ENCODE measurements at regions of chr11 and their contacts with region 1.

Region 1: DNA sequence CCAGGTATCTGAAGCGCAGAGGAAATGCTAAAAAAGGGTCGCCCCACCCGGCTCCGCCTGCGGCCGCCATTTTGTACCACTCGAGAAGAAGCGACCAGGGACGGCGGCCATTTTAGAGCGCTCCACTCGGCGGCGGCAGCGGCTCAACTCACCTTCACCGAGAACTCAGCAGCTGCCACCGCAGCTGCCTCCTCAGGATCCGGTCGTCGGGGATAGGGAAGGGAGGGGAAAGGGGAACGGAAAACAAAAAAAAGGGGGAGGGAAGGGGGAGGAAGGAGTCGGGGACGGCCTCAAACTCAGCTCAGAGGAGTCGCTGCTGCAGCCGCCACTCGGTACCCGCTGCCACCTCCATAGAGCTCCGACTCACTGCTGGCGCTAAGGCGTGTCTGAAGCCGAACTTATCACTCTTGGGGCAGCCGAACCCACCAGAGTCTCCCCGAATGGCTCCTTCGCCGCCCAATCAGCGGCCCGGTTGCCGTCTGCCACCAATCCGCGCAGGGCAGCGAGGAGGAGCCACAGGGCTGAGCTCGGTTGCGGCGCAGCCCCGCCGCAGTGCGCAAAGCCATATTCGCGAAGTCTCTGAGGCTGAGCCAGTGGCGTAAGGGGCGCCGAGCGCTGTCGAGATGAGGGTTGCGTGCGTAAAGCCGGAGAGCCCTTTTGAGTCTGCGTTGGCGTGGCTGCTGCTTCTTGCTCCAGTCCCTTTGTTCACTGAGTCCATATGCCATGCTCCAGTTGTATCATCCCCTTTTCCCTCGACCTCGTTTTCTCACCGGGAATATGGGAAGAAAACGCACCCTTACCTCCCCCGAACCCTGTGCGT is at the start of gene EIF4G2:
- DNase-seq: peak; percentile 95 to 99 (median 98)
- ATAC-seq: peak; percentile 88 to 91
- H3K4me3 Mint-ChIP-seq: peak within 1 kb of the TSS; percentile 94 to 99 (median 97)
- H3K27ac Mint-ChIP-seq: peak within 1 kb of the TSS; percentile 96 to 100 (median 99)
- H3K4me1 Mint-ChIP-seq: peaks cover 22 to 52% (median 43%) of the 10 kb centered on the region in 4 donors
- H3K27me3 Mint-ChIP-seq: no peaks in the 10 kb centered on the region
- polyA plus RNA-seq, gene EIF4G2: 315 to 425 (median 340) TPM

Region 2: GRCh38 chr11:10725114-10725906 is 83.5 kb before region 1 on chr11:
- POLR2A ChIA-PET with region 1: no interaction called
- DNase-seq: peak in 2 of 10 donors; percentile 25 to 26
- ATAC-seq: peak; percentile 60 to 69
- H3K4me3 Mint-ChIP-seq: peak overlapping the region in 6 of 10 donors; percentile 19 to 45 (median 23)
- H3K27ac Mint-ChIP-seq: peak overlapping the region in 3 of 10 donors; percentile 34 to 53 (median 41)
- H3K4me1 Mint-ChIP-seq: peaks cover 16 to 20% (median 19%) of the 10 kb centered on the region in 4 donors
- H3K27me3 Mint-ChIP-seq: peaks cover 0 to 6% (median 3%) of the 10 kb centered on the region in 5 donors

Region 3: GRCh38 chr11:10750838-10751580 is 57.8 kb before region 1 on chr11 and contains the start of gene CTR9:
- POLR2A ChIA-PET with region 1: interaction called, 46 read pairs
- DNase-seq: peak; percentile 83 to 93 (median 88)
- ATAC-seq: peak; percentile 90 to 93
- H3K4me3 Mint-ChIP-seq: peak within 1 kb of the TSS; percentile 93 to 97 (median 96)
- H3K27ac Mint-ChIP-seq: peak within 1 kb of the TSS; percentile 94 to 98 (median 95)
- H3K4me1 Mint-ChIP-seq: peaks cover 7 to 32% (median 24%) of the 10 kb centered on the region in 4 donors
- H3K27me3 Mint-ChIP-seq: no peaks in the 10 kb centered on the region
- polyA plus RNA-seq, gene CTR9: 53.2 to 66.8 (median 53.7) TPM

Region 4: DNA sequence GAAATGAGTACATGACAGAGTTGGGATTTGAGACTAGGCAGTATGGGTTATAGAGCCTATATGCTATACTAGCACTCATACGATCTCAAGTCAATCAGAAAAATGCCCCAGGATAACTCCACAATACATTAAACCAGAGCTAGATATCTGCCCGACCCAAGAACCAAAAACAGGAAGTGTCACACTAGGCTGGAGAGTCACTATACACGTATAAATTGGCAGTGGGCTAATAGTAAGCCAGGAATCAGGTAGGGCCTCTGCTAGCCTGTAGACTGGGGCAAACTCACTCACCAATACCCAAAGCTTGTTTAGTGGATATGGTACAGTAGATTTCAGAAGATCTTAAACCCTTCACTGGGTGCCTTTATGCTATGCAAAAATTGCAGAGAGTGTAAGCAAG is 16.1 kb after region 1 on chr11:
- POLR2A ChIA-PET with region 1: interaction called, 25 read pairs
- DNase-seq: no peak
- ATAC-seq: peak in 1 of 2 donors; percentile 73
- H3K4me3 Mint-ChIP-seq: peak overlapping the region in 6 of 10 donors; percentile 0 to 38 (median 14)
- H3K27ac Mint-ChIP-seq: peak overlapping the region in 7 of 10 donors; percentile 1 to 77 (median 40)
- H3K4me1 Mint-ChIP-seq: peaks cover 9 to 22% (median 13%) of the 10 kb centered on the region in 4 donors
- H3K27me3 Mint-ChIP-seq: peaks cover 0 to 3% (median 0%) of the 10 kb centered on the region in 5 donors

Region 5: DNA sequence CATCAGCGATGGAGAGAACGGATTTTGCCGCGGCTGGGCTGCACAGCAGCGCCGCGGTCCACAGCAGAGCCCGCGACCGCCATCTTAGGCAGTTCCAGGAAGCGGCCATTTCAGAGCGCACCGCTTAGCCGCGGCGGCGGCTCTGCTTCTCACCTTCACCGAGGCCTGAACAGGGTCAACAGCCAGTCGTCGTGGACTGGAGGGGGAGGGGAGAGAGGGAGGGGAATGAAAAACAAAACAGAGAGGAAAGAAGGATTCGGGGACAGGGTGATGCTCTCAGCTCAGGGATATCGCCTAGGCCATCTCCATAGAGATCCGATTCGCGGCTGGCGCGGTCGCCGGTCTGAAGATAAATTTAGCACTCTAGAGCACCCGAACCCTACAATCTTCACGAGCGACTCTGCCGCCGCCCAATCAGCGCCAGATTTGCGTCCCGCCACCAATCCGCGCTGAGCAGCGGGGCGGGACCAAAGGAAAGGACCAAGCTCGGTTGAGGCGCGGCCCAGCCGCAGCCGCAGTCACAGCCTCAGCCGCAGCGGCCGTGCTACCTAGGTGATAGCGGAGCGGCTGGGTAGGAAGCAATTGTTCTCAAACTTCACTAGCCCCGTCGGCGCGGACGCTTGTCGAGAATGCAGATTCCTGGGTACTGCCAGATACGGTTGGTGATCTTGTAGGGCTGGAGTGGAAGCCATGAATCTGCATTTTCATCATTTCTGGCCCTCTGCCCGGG is 49.1 kb after region 1 on chr11 and contains the start of gene ZBED5:
- POLR2A ChIA-PET with region 1: interaction called, 430 read pairs
- DNase-seq: peak; percentile 91 to 98 (median 95)
- ATAC-seq: peak; percentile 88 to 90
- H3K4me3 Mint-ChIP-seq: peak within 1 kb of the TSS; percentile 96 to 100 (median 100)
- H3K27ac Mint-ChIP-seq: peak within 1 kb of the TSS; percentile 98 to 100 (median 100)
- H3K4me1 Mint-ChIP-seq: peaks cover 20 to 58% (median 56%) of the 10 kb centered on the region in 4 donors
- H3K27me3 Mint-ChIP-seq: no peaks in the 10 kb centered on the region
- polyA plus RNA-seq, gene ZBED5: 14.6 to 18.6 (median 17.0) TPM

Region 6: DNA sequence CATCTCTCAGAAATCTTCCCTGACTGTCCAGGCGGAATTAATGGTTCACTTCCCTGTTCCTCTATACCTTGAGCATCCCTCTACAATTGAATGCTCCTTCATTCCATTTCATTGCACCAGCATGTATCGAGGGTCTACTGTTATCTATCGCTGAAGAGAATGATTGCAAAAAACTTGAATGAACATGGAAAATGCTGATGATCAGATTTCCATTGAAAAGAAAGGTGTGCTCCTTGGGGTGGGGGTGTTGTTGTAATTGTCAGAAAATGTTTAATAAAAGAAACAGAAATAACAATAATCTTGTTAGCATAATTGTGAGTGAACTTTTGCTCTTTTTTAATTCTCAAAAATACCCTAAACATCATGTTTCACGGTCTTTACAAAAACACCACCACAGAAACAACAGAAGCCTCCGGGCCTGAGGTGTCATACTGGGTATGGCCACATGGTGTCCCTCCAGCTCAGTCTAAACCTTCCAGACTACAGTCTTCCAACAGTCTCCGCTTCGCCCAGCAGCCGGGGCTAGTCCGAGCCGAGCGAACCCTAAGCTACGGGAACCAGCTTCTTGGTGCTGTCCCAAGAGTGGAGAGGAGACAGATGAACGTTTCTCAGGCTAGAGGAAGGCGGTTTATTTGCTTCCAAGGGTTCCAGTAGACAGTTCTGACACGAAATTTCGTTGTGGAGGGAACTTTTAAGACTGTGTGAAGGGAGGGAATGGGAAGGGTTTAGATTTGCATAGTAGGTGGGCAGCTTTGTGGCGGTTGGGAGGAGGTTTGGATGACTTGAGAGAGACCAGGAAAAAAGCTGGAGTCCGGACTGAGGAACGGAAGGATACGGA is 124.9 kb after region 1 on chr11:
- POLR2A ChIA-PET with region 1: interaction called, 12 read pairs
- DNase-seq: peak; percentile 64 to 88 (median 75)
- ATAC-seq: peak; percentile 77 to 82
- H3K4me3 Mint-ChIP-seq: peak overlapping the region; percentile 84 to 95 (median 92)
- H3K27ac Mint-ChIP-seq: peak overlapping the region in 5 of 10 donors; percentile 27 to 89 (median 44)
- H3K4me1 Mint-ChIP-seq: peaks cover 4 to 26% (median 21%) of the 10 kb centered on the region in 4 donors
- H3K27me3 Mint-ChIP-seq: peaks cover 14 to 34% (median 23%) of the 10 kb centered on the region in 5 donors

Measured in naive thymus-derived CD8-positive, alpha-beta T cell (primary cell).